ENCODE measurements at regions of chr20 and their contacts with region 1.

Region 1: GRCh38 chr20:45934586-45935415 is at the start of gene PCIF1:
- DNase-seq: peak; percentile 93
- ATAC-seq: peak; percentile 79
- H3K4me3 ChIP-seq: peak within 1 kb of the TSS; percentile 94 to 97
- H3K27ac ChIP-seq: peak within 1 kb of the TSS; percentile 100
- H3K4me1 ChIP-seq: peaks cover 4 to 32% of the 10 kb centered on the region in 2 experiments; a peak in 3 of 4 replicates
- H3K27me3 ChIP-seq: no peaks in the 10 kb centered on the region
- CTCF ChIP-seq: no peak
- POLR2A ChIP-seq: peak; percentile 89
- RAD21 ChIP-seq: no peak
- total RNA-seq, gene PCIF1: 31.8 TPM

Region 2: GRCh38 chr20:45545754-45546453 is 388.9 kb before region 1 on chr20:
- CTCF ChIA-PET with region 1: no interaction called
- POLR2A ChIA-PET with region 1: no interaction called
- RAD21 ChIA-PET with region 1: no interaction called
- intact Hi-C with region 1: loop called (anchors 10 kb)
- DNase-seq: peak; percentile 21
- ATAC-seq: peak; percentile 81
- H3K4me3 ChIP-seq: no peak overlapping the region
- H3K27ac ChIP-seq: no peak overlapping the region
- H3K4me1 ChIP-seq: no peaks in the 10 kb centered on the region
- H3K27me3 ChIP-seq: peaks cover 49% of the 10 kb centered on the region; the same call in 1 of the 2 replicates
- CTCF ChIP-seq: peak; percentile 24 to 61 (median 59); a peak in 4 of 6 replicates
- POLR2A ChIP-seq: no peak
- RAD21 ChIP-seq: peak; percentile 81

Region 3: GRCh38 chr20:45833030-45833882 is 101.5 kb before region 1 on chr20 and contains the start of gene SNX21:
- CTCF ChIA-PET with region 1: no interaction called
- POLR2A ChIA-PET with region 1: no interaction called
- RAD21 ChIA-PET with region 1: no interaction called
- intact Hi-C with region 1: loop called (anchors 10 kb)
- DNase-seq: no peak
- ATAC-seq: peak; percentile 91
- H3K4me3 ChIP-seq: peak within 1 kb of the TSS; percentile 65 to 74
- H3K27ac ChIP-seq: peak within 1 kb of the TSS; percentile 68
- H3K4me1 ChIP-seq: peaks cover 26 to 35% of the 10 kb centered on the region in 2 experiments
- H3K27me3 ChIP-seq: no peaks in the 10 kb centered on the region
- CTCF ChIP-seq: no peak
- POLR2A ChIP-seq: no peak
- RAD21 ChIP-seq: no peak
- total RNA-seq, gene SNX21: 11.9 TPM

Region 4: GRCh38 chr20:45924391-45925261 is 10.2 kb before region 1 on chr20:
- CTCF ChIA-PET with region 1: interaction called, 4 read pairs
- POLR2A ChIA-PET with region 1: interaction called, 15 read pairs
- RAD21 ChIA-PET with region 1: no interaction called
- intact Hi-C with region 1: no loop called
- DNase-seq: no peak
- ATAC-seq: no peak
- H3K4me3 ChIP-seq: no peak overlapping the region
- H3K27ac ChIP-seq: no peak overlapping the region
- H3K4me1 ChIP-seq: no peaks in the 10 kb centered on the region
- H3K27me3 ChIP-seq: no peaks in the 10 kb centered on the region
- CTCF ChIP-seq: no peak
- POLR2A ChIP-seq: no peak
- RAD21 ChIP-seq: no peak

Region 5: GRCh38 chr20:46151936-46152335 is 217.1 kb after region 1 on chr20:
- CTCF ChIA-PET with region 1: no interaction called
- POLR2A ChIA-PET with region 1: no interaction called
- RAD21 ChIA-PET with region 1: no interaction called
- intact Hi-C with region 1: no loop called
- DNase-seq: no peak
- ATAC-seq: peak; percentile 83
- H3K4me3 ChIP-seq: no peak overlapping the region
- H3K27ac ChIP-seq: no peak overlapping the region
- H3K4me1 ChIP-seq: no peaks in the 10 kb centered on the region
- H3K27me3 ChIP-seq: no peaks in the 10 kb centered on the region; the same call in 1 of the 2 replicates
- CTCF ChIP-seq: peak in 2 of 3 experiments; percentile 84 to 86; a peak in 4 of 6 replicates
- POLR2A ChIP-seq: no peak
- RAD21 ChIP-seq: no peak

Measured in HCT116 (cell line).